ENCODE measurements at regions of chr11 and their contacts with region 1.

Region 1: GRCh38 chr11:18721561-18722292 is 4.3 kb downstream of the IGSF22 start:
- DNase-seq: peak; percentile 72
- ATAC-seq: peak; percentile 68
- H3K4me3 Mint-ChIP-seq: peak overlapping the region; percentile 78
- H3K27ac Mint-ChIP-seq: no peak overlapping the region
- H3K4me1 Mint-ChIP-seq: peaks cover 5% of the 10 kb centered on the region
- H3K27me3 Mint-ChIP-seq: no peaks in the 10 kb centered on the region

Region 2: DNA sequence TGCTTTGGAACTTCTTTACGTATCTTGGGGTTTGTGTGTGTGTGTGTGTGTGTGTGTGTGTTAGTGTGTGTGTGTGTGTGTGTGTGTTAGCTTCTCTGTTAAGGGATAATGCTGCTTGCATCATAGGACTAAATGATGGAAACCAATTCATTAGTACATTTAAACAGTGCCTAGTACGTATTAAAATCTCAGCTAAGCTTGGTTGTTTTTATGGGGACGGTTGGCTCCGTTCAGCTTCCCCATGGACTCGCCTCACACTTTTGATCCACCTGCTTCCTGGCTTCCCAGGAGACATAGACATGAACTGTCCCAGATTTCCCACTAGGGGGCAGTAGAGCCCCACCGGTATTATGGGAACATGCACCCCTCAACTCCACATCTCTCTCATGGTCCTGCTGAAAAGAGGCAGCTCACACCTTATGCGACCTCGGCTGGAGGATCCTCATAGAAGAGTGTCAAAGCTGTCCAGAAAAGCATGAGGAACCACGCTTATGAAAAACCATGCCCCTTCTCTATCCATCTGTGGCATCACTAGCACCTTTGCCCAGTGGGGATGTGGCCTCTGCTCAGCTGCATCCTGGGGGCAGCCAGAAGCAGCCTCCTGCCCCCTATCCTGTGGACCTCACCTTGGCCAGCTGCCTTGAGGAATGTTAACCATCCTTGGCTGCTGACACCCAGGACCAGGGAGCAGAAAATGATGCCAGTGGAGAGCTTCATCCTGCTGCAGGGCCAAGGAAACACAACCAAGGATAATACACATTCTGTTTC is 606.2 kb before region 1 on chr11:
- CTCF ChIA-PET with region 1: interaction called, 3 read pairs
- POLR2A ChIA-PET with region 1: no interaction called
- intact Hi-C with region 1: loop called in 1 of 2 experiments (anchors 5 kb)
- DNase-seq: peak; percentile 79
- ATAC-seq: peak; percentile 91
- H3K4me3 Mint-ChIP-seq: no peak overlapping the region
- H3K27ac Mint-ChIP-seq: no peak overlapping the region
- H3K4me1 Mint-ChIP-seq: peaks cover 6% of the 10 kb centered on the region
- H3K27me3 Mint-ChIP-seq: peaks cover 24% of the 10 kb centered on the region

Region 3: DNA sequence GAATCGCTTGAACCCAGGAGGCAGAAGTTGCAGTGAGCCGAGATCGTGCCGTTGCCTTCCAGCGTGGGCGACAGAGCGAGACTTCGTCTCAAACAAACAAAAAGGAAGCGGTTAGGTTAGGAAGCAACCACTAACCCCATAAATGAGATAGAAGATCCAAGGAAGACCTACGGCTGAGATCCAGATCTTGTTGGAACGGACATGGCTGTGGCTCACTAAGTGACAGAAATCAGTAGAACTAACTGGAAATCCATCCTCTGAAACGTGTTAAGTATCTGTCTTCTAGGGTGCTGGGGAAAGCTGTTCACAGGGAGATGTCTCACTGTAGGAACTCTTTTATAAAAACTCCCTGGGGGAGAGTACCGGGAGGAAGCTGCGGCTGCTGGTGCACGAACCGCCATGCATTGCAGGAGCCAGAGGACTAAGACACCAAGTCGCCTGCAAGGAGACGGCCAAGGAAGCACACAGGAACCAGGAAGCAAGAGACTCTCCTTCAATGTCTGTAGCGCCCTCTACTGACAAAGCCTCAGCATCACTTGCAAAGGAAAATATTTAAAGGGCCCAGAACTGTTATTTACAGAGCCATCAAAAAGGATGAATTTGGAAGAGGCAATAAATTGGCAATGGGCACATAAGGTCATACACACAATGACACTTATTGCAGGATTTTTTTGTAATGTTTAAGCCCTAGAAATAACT is 70.7 kb before region 1 on chr11:
- CTCF ChIA-PET with region 1: interaction called, 12 read pairs
- POLR2A ChIA-PET with region 1: no interaction called
- intact Hi-C with region 1: no loop called
- DNase-seq: peak; percentile 66
- ATAC-seq: peak; percentile 74
- H3K4me3 Mint-ChIP-seq: no peak overlapping the region
- H3K27ac Mint-ChIP-seq: no peak overlapping the region
- H3K4me1 Mint-ChIP-seq: no peaks in the 10 kb centered on the region
- H3K27me3 Mint-ChIP-seq: no peaks in the 10 kb centered on the region

Region 4: GRCh38 chr11:18698341-18699268 is 23.1 kb before region 1 on chr11 and contains the start of gene TMEM86A:
- CTCF ChIA-PET with region 1: interaction called, 55 read pairs
- POLR2A ChIA-PET with region 1: no interaction called
- intact Hi-C with region 1: loop called in 1 of 2 experiments (anchors 1 kb)
- DNase-seq: peak; percentile 93
- ATAC-seq: peak; percentile 96
- H3K4me3 Mint-ChIP-seq: peak within 1 kb of the TSS; percentile 72
- H3K27ac Mint-ChIP-seq: peak within 1 kb of the TSS; percentile 69
- H3K4me1 Mint-ChIP-seq: peaks cover 13% of the 10 kb centered on the region
- H3K27me3 Mint-ChIP-seq: peaks cover 3% of the 10 kb centered on the region
- total RNA-seq, gene TMEM86A: 0.09 to 0.26 TPM

Region 5: GRCh38 chr11:18731949-18732821 is 10.5 kb after region 1 on chr11:
- CTCF ChIA-PET with region 1: interaction called, 30 read pairs
- POLR2A ChIA-PET with region 1: no interaction called
- intact Hi-C with region 1: no loop called
- DNase-seq: peak; percentile 78
- ATAC-seq: peak; percentile 73
- H3K4me3 Mint-ChIP-seq: no peak overlapping the region
- H3K27ac Mint-ChIP-seq: no peak overlapping the region
- H3K4me1 Mint-ChIP-seq: peaks cover 3% of the 10 kb centered on the region
- H3K27me3 Mint-ChIP-seq: no peaks in the 10 kb centered on the region

Region 6: DNA sequence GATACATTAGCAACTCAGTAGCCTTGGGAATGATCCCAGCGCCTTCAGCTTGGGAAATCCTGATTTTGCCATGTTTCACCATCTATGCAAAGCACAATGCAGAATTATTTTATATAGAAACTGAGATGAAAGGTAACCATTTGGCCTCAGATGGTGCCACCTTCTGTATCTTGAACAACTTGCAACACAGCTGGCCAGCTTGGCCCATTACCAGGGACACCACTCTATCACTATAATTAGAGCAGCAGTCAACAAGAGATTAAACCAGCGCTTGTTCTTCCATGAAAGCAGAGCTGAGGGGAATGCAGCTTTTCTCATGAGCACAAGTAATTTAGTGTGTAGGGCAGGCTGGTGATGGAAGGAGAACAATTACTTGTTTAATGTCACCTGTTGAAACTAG is 388.6 kb after region 1 on chr11:
- CTCF ChIA-PET with region 1: no interaction called
- POLR2A ChIA-PET with region 1: no interaction called
- intact Hi-C with region 1: no loop called
- DNase-seq: no peak
- ATAC-seq: no peak
- H3K4me3 Mint-ChIP-seq: no peak overlapping the region
- H3K27ac Mint-ChIP-seq: no peak overlapping the region
- H3K4me1 Mint-ChIP-seq: no peaks in the 10 kb centered on the region
- H3K27me3 Mint-ChIP-seq: no peaks in the 10 kb centered on the region

Region 7: DNA sequence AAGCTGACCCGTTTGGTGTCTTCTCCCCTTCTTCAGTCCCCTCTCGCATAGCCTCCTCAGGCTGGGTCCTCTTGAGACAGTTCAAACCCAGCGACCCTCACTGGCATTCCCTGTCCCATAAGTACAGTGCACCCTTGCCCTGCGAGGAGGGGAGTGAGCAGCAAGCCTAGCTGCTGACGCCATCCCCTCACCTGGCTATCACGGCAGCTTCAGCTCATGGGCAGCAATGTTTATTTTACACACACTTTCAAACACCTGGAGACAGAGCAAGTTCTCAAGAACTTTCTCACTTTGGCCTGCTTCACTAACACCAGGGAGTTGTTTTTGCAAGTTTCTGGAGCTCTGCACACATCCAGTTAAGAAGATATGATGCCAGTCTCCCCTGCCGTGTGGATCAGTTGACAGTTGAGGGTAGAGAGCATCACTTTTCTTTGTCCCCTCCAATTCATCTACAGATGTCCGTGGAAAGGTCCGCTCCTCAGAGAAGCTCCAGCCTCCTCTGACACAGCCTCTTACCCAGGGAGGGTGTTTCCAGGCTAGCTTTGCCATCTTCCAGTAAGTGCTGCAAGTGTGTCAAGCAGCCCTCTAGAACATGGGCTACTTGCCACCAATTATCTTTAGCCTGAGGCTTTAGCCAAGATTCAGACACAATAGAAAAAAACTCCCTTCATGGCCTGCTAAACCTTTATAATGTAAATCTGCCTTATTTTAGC is 708.8 kb after region 1 on chr11:
- CTCF ChIA-PET with region 1: interaction called, 11 read pairs
- POLR2A ChIA-PET with region 1: no interaction called
- intact Hi-C with region 1: no loop called
- DNase-seq: no peak
- ATAC-seq: no peak
- H3K4me3 Mint-ChIP-seq: no peak overlapping the region
- H3K27ac Mint-ChIP-seq: no peak overlapping the region
- H3K4me1 Mint-ChIP-seq: peaks cover 3% of the 10 kb centered on the region
- H3K27me3 Mint-ChIP-seq: peaks cover 50% of the 10 kb centered on the region

Measured in activated CD4-positive, alpha-beta T cell treated with anti-CD3 and anti-CD28 coated beads for 36 hours (primary cell).